Activated T-helper 1 cell treated with anti-CD3 and anti-CD28 coated beads, Interleukin-12 subunit alpha, Interleukin-12 subunit beta, Interleukin-2, Interleukin-4 antibody, amounts not matched to agents 30 ng/mL and 10 ng/mL and 1 ng/mL, durations not matched to agents 14 hours and 24 hours and 36 hours (primary cell): ENCODE measurements at regions of chr20 and their contacts with region 1.

Region 1: GRCh38 chr20:47356526-47357295 is at the start of gene ZMYND8:
- DNase-seq: peak; percentile 96
- H3K4me3 Mint-ChIP-seq: peak within 1 kb of the TSS; percentile 92
- H3K27ac Mint-ChIP-seq: peak within 1 kb of the TSS; percentile 99
- H3K4me1 Mint-ChIP-seq: no peaks in the 10 kb centered on the region
- H3K27me3 Mint-ChIP-seq: no peaks in the 10 kb centered on the region
- total RNA-seq, gene ZMYND8: 42.6 and 43.3 TPM in 2 replicates

Region 2: DNA sequence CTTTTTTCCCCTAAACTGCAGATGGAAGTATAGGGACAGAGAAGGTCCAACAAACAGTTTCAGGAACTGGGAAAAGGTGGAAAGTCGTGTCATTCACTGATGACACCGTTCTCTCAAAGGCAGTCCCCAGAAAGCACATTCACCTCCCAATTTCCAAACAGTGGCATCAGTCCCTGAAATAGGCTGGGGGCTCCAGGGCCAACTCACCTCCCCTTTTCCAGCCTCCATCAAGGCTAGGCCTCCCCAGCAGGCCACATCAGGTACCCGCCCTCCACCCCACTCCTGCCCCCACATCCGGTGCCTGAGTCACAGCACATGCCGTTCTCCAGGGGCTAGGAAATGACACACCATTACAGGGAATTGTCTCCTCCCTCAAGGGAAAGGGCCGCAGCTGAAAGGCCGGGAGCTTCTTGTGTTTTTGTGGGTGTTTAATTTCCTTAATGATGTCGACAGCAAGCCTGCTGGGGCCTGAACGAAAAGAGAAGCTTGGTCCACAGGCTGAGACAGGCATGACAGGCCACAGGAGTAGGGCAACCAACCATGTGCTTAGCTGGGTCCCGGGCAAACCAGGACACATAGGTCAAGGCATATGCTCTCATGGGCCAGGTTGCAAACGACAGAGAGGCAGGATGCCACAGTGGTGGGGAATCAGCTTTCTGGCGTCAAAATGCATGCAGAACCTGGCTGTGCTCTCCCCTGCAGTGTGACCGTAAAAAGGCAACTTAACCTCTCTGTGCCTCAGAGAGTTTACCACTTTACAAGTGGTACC is 39.4 kb before region 1 on chr20:
- intact Hi-C with region 1: loop called (anchors 1 kb)
- DNase-seq: peak; percentile 43
- H3K4me3 Mint-ChIP-seq: peak overlapping the region; percentile 51
- H3K27ac Mint-ChIP-seq: peak overlapping the region; percentile 92
- H3K4me1 Mint-ChIP-seq: peaks cover 61% of the 10 kb centered on the region
- H3K27me3 Mint-ChIP-seq: no peaks in the 10 kb centered on the region

Region 3: DNA sequence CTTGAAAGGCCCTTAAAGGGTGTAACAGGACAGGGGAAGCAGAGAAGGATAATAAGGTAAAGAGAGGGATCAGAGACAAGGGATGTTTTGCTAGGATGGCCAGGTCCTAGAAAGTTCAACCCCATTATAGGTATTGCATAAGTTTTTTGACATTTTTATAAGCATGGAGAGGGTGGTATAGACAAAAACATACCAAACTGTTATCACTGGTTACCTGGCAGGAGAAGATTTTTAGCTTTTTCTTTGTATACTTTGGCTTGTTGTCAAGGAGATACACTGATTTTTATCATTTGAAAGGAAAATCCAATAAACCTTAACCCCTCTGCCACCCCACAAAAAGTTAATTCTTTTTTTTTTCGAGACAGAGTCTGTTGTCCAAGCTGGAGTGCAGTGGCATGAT is 28.6 kb before region 1 on chr20:
- intact Hi-C with region 1: no loop called
- DNase-seq: no peak
- H3K4me3 Mint-ChIP-seq: no peak overlapping the region
- H3K27ac Mint-ChIP-seq: peak overlapping the region; percentile 13
- H3K4me1 Mint-ChIP-seq: peaks cover 28% of the 10 kb centered on the region
- H3K27me3 Mint-ChIP-seq: no peaks in the 10 kb centered on the region

Region 4: GRCh38 chr20:47501483-47502270 is 145.0 kb after region 1 on chr20 and contains the start of gene NCOA3:
- intact Hi-C with region 1: loop called (anchors 2 kb)
- DNase-seq: peak; percentile 89
- H3K4me3 Mint-ChIP-seq: peak within 1 kb of the TSS; percentile 92
- H3K27ac Mint-ChIP-seq: peak within 1 kb of the TSS; percentile 99
- H3K4me1 Mint-ChIP-seq: peaks cover 61% of the 10 kb centered on the region
- H3K27me3 Mint-ChIP-seq: no peaks in the 10 kb centered on the region
- total RNA-seq, gene NCOA3: 132 and 133 TPM in 2 replicates

Region 5: GRCh38 chr20:47610247-47610944 is 253.7 kb after region 1 on chr20:
- intact Hi-C with region 1: loop called (anchors 1 kb)
- DNase-seq: peak; percentile 60
- H3K4me3 Mint-ChIP-seq: peak overlapping the region; percentile 77
- H3K27ac Mint-ChIP-seq: peak overlapping the region; percentile 97
- H3K4me1 Mint-ChIP-seq: peaks cover 84% of the 10 kb centered on the region
- H3K27me3 Mint-ChIP-seq: no peaks in the 10 kb centered on the region